ENCODE measurements at regions of chr6 and their contacts with region 1.

Region 1: DNA sequence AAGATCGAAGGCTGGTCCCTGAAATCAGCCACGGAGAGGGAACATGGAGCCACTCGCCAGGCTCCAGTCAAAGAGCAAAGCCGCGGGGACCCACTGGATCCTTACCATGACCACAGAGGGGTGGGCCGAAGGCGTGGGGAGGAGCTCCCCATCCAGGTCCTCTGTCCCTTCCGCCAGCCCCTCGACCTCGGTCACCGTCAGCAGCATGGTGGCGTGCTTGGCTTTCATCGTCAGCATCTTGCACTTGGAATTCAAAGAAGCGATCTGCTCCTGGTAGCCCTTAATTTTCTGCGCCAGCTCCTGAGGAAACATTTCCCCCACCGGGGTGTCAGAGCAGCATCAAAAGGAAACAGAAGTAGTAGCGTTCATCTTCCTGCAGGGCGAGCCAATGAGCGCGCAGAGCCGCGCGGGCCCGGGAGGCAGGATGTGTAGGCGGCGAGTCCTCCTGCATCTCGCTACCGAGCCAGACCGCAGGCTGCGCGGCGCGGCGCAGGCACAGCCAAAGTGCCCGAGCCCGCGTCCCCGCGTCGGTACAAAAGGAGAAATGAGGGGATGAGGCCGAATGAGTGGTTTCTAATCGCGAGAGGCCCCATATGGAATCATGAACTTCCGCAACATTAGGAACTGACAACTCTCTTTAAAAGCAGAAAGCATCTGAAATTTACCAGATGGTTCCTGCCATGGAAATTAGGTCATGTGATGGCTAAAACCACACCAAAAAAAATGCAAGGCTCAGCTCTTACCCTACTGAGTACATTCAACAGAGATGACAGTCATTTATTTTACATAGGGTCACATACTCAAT is 335.2 kb downstream of the SYNE1 start:
- DNase-seq: peak; percentile 85
- ATAC-seq: peak; percentile 98
- H3K4me3 ChIP-seq: peak overlapping the region; percentile 60 to 78 (median 74)
- H3K27ac ChIP-seq: peak overlapping the region; percentile 87
- H3K4me1 ChIP-seq: peaks cover 41% of the 10 kb centered on the region
- H3K27me3 ChIP-seq: no peaks in the 10 kb centered on the region; a peak in 1 of 5 replicates
- CTCF ChIP-seq: peak; percentile 84
- EP300 ChIP-seq: 0 out of 4 replicates have a peak, but pooled peaks of 1 of the 2 experiments have one; percentile 2
- POLR2A ChIP-seq: peak; percentile 41 to 71
- RAD21 ChIP-seq: peak; percentile 83

Region 2: GRCh38 chr6:151647976-151648639 is 653.9 kb before region 1 on chr6:
- CTCF ChIA-PET with region 1: no interaction called
- POLR2A ChIA-PET with region 1: no interaction called
- in situ Hi-C with region 1: no loop called
- intact Hi-C with region 1: no loop called
- DNase-seq: peak; percentile 56
- ATAC-seq: peak; percentile 88
- H3K4me3 ChIP-seq: no peak overlapping the region
- H3K27ac ChIP-seq: no peak overlapping the region
- H3K4me1 ChIP-seq: peaks cover 39% of the 10 kb centered on the region
- H3K27me3 ChIP-seq: no peaks in the 10 kb centered on the region
- CTCF ChIP-seq: peak; percentile 83
- EP300 ChIP-seq: no peak
- POLR2A ChIP-seq: no peak
- RAD21 ChIP-seq: peak; percentile 66; the same call in 1 of the 2 replicates

Region 3: GRCh38 chr6:152195896-152196295 is 106.1 kb before region 1 on chr6:
- CTCF ChIA-PET with region 1: no interaction called
- POLR2A ChIA-PET with region 1: no interaction called
- in situ Hi-C with region 1: no loop called
- intact Hi-C with region 1: no loop called
- DNase-seq: no peak
- ATAC-seq: no peak
- H3K4me3 ChIP-seq: no peak overlapping the region
- H3K27ac ChIP-seq: no peak overlapping the region
- H3K4me1 ChIP-seq: no peaks in the 10 kb centered on the region
- H3K27me3 ChIP-seq: no peaks in the 10 kb centered on the region
- CTCF ChIP-seq: no peak
- EP300 ChIP-seq: no peak
- POLR2A ChIP-seq: no peak
- RAD21 ChIP-seq: no peak

Region 4: DNA sequence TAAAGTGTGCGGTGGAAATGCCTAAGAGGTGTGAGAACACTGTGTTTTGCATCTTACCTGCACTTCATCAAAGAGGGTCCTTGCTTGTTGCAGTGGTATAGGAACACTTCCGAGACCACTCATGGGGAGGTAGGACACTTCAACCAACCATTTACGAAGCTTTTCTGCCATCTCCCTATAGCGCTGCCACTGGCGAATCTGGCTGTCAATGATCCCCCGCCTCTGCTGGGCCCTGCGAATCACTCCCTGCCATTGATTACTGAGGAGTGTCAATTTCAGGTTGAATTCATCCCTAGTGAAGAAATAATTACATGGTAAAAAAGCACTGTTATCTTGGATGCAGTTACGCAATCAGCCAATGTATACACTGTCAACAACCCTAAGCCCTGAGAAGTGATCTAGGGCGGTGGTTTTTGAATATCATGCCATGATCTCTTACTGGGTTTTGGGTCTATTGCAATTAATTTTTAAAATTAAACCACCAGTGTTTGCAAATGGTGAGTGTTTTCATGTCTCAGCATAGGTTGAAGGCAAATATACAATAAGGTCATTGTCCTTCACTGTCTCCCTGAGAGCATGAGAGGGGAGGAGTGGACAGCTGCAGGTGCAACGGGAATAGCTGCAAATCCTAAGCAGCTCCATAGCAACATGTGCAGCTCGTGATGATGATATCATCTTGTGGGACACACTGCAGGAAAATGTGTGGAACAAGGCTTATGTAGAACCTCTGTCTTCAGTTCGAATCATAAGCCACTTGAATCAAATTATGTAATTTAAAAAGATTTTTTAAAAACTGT is 93.9 kb before region 1 on chr6:
- CTCF ChIA-PET with region 1: no interaction called
- POLR2A ChIA-PET with region 1: no interaction called
- in situ Hi-C with region 1: no loop called
- intact Hi-C with region 1: no loop called
- DNase-seq: peak; percentile 50
- ATAC-seq: peak; percentile 90
- H3K4me3 ChIP-seq: no peak overlapping the region
- H3K27ac ChIP-seq: no peak overlapping the region
- H3K4me1 ChIP-seq: peaks cover 9% of the 10 kb centered on the region; the same call in 1 of the 2 replicates
- H3K27me3 ChIP-seq: no peaks in the 10 kb centered on the region
- CTCF ChIP-seq: no peak
- EP300 ChIP-seq: peak; percentile 26 to 27; a peak in 2 of 4 replicates
- POLR2A ChIP-seq: no peak
- RAD21 ChIP-seq: no peak

Region 5: GRCh38 chr6:152277826-152278329 is 24.1 kb before region 1 on chr6:
- CTCF ChIA-PET with region 1: no interaction called
- POLR2A ChIA-PET with region 1: interaction called, 27 read pairs
- in situ Hi-C with region 1: no loop called
- intact Hi-C with region 1: no loop called
- DNase-seq: peak; percentile 77
- ATAC-seq: peak; percentile 99
- H3K4me3 ChIP-seq: peak overlapping the region; percentile 5 to 54 (median 29); a peak in 4 of 6 replicates
- H3K27ac ChIP-seq: peak overlapping the region; percentile 71
- H3K4me1 ChIP-seq: peaks cover 25% of the 10 kb centered on the region
- H3K27me3 ChIP-seq: no peaks in the 10 kb centered on the region
- CTCF ChIP-seq: no peak; the same call in 1 of the 2 replicates
- EP300 ChIP-seq: 0 out of 4 replicates have a peak, but pooled peaks of 1 of the 2 experiments have one; percentile 11
- POLR2A ChIP-seq: 0 out of 4 replicates have a peak, but pooled peaks of 1 of the 2 experiments have one; percentile 24
- RAD21 ChIP-seq: peak; percentile 48; the same call in 1 of the 2 replicates

Region 6: DNA sequence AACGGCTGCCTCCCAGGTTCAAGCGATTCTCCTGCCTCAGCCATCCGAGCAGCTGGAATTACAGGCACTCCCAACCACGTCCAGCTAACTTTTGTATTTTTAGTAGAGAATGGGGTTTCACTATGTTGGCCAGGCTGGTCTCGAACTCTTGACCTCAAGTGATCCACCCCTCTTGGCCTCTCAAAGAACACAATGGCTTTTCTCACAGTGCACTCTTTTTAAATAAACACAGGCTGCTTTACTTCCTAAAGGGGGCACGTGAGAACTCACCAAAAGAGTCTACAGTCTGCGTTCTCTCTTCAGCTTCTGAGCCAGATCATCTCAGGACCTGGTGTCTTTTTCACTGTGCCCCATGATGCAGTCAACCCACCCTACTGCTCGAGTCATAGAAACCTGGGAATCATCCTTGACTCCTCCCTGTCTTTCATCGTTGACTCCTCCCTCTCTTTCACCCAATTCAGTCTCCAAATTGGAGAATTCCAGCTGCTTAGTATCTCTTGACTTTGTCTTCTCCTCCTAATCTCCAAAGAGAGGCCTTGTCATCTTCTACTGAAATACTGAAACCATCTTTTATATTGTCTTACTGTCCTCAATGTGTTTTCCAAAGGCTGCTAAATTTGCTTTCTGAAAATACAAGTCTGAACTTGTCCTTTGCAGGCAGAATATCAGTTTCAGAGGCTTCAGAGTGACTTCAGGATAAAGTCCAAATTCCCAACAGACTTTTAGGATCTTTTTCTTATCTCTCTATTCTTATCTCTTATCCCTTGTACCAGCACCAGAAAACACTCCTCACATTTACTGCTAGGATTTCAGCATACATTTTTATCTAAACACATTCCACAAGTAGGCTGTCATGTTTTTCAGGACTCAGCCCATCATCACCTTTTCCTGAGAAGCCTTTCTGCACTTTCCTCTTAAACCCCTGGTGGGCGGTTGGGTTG is 11.8 kb after region 1 on chr6:
- CTCF ChIA-PET with region 1: no interaction called
- POLR2A ChIA-PET with region 1: interaction called, 17 read pairs
- in situ Hi-C with region 1: no loop called
- intact Hi-C with region 1: loop called (anchors 1 kb)
- DNase-seq: peak; percentile 89
- ATAC-seq: peak; percentile 97
- H3K4me3 ChIP-seq: peak overlapping the region; percentile 5 to 45 (median 9); a peak in 2 of 6 replicates
- H3K27ac ChIP-seq: peak overlapping the region; percentile 62
- H3K4me1 ChIP-seq: peaks cover 22% of the 10 kb centered on the region
- H3K27me3 ChIP-seq: no peaks in the 10 kb centered on the region
- CTCF ChIP-seq: no peak
- EP300 ChIP-seq: no peak; a peak in 1 of 4 replicates
- POLR2A ChIP-seq: no peak
- RAD21 ChIP-seq: no peak

Region 7: DNA sequence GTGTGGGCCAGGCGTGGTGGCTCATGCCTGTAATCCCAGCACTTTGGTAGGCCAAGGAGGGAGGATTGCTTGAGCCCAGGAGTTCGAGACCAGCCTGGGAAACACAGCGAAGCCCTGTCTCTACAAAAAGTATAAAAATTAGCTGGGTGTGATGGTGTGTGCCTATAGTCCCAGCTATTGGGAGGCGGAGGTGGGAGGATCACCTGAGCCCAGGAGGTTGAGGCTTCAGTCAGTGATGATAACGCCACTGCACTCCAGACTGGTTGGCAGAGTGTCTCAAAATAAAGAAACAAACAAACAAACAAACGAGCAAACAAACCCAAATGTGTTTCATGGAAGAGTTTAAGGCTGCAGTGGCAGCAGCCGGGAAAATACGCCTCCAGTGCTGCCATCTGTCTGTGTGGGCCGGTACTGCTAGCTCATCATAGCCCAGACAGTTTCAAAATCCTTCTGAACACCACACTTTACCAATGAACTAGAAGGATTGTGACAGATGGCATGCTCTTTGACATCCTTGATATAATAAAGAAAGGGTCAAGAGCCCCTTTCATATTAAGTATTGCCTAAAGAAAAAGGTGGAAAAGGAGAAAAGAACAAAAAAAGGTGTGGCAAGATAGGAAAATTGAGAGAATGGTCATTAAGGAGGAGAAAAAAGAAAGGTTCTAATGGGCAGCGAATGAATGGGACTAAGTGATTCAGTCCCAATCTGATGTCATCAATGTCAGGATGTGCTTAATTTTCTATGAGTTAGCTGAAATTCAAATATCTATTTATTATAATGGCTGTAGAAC is 36.6 kb after region 1 on chr6:
- CTCF ChIA-PET with region 1: interaction called, 8 read pairs
- POLR2A ChIA-PET with region 1: interaction called, 13 read pairs
- in situ Hi-C with region 1: no loop called
- intact Hi-C with region 1: loop called (anchors 1 kb)
- DNase-seq: peak; percentile 23
- ATAC-seq: peak; percentile 93
- H3K4me3 ChIP-seq: no peak overlapping the region
- H3K27ac ChIP-seq: no peak overlapping the region
- H3K4me1 ChIP-seq: no peaks in the 10 kb centered on the region
- H3K27me3 ChIP-seq: no peaks in the 10 kb centered on the region
- CTCF ChIP-seq: peak; percentile 87
- EP300 ChIP-seq: no peak
- POLR2A ChIP-seq: no peak
- RAD21 ChIP-seq: peak; percentile 72

Region 8: DNA sequence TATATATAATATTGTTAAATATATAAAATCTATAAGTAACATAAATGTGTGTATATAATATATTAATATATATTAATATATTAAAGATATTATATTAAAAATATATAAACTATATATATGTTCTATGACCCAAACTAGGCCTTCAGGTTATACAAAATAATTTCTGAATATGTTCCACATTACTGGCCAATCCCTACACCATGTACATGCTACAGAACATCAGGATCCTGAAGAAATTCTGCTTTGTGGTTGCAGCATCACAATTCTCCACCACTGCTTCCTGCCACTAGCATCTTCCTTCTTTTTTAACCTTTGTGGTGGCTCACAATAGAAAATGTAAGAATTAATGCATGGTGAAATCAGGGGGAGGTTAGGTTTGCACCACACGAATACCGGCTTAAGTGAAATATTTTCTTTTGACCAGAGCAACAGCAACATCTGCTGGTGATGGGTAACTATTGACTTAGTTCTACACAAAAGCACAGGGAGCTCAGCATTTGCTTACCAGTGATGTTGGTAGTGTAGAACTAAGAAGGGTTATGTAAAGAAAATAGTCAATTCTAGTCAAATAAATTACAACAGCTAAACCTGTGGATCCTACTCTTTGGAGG is 54.6 kb after region 1 on chr6:
- CTCF ChIA-PET with region 1: no interaction called
- POLR2A ChIA-PET with region 1: no interaction called
- in situ Hi-C with region 1: no loop called
- intact Hi-C with region 1: loop called (anchors 1 kb)
- DNase-seq: peak; percentile 63
- ATAC-seq: peak; percentile 96
- H3K4me3 ChIP-seq: no peak overlapping the region
- H3K27ac ChIP-seq: no peak overlapping the region
- H3K4me1 ChIP-seq: no peaks in the 10 kb centered on the region
- H3K27me3 ChIP-seq: no peaks in the 10 kb centered on the region
- CTCF ChIP-seq: peak; percentile 82
- EP300 ChIP-seq: no peak
- POLR2A ChIP-seq: no peak
- RAD21 ChIP-seq: peak; percentile 76; the same call in 1 of the 2 replicates

Region 9: DNA sequence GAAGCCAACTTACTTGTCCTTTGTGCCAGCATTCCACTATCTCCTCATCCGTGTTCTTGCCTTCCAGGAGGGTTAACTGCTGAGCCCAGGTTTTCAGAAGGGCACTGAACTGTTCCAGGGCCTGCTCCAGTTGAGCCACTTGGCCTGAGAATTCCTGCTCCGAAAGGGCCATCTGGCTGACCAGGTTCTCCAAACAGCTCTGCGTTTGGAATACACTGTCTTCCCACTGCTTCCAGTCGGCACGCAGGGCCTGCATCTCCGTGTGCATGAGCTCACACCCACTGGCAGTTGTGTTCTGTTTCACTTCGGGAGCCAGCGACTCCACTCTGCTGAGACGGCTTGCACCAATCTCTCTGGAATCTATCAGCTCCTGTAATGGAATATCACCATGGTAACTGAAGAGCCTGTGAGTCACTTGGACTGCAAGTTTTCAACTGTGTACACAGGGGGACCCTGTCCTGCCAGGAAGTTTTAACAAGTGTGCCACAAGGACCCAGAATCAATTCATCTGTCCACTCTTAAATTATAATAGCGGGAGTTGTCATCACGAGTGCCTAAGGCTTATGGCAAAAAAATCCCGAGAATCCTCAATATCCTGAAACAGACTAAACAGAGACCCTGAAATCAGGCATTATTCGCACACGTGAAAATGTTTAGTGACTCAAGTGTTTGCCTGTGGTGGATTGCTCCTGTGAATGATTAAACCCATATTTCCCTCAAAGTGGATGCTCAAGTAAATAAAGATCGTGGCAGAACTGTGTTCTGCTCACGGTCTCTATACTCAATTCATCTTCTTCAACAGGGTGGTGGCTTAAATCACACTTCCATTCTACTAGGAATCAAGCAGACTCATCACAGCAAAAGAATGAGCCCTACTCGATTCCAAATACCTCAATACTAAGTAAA is 79.3 kb after region 1 on chr6:
- CTCF ChIA-PET with region 1: no interaction called
- POLR2A ChIA-PET with region 1: no interaction called
- in situ Hi-C with region 1: no loop called
- intact Hi-C with region 1: loop called (anchors 2 kb)
- DNase-seq: peak; percentile 91
- ATAC-seq: peak; percentile 94
- H3K4me3 ChIP-seq: peak overlapping the region; percentile 66 to 76 (median 68)
- H3K27ac ChIP-seq: peak overlapping the region; percentile 55
- H3K4me1 ChIP-seq: peaks cover 26% of the 10 kb centered on the region
- H3K27me3 ChIP-seq: no peaks in the 10 kb centered on the region; a peak in 1 of 5 replicates
- CTCF ChIP-seq: no peak
- EP300 ChIP-seq: peak; percentile 52 to 78; a peak in 3 of 4 replicates
- POLR2A ChIP-seq: peak in 1 of 2 experiments; percentile 94; a peak in 2 of 4 replicates
- RAD21 ChIP-seq: no peak

Region 10: DNA sequence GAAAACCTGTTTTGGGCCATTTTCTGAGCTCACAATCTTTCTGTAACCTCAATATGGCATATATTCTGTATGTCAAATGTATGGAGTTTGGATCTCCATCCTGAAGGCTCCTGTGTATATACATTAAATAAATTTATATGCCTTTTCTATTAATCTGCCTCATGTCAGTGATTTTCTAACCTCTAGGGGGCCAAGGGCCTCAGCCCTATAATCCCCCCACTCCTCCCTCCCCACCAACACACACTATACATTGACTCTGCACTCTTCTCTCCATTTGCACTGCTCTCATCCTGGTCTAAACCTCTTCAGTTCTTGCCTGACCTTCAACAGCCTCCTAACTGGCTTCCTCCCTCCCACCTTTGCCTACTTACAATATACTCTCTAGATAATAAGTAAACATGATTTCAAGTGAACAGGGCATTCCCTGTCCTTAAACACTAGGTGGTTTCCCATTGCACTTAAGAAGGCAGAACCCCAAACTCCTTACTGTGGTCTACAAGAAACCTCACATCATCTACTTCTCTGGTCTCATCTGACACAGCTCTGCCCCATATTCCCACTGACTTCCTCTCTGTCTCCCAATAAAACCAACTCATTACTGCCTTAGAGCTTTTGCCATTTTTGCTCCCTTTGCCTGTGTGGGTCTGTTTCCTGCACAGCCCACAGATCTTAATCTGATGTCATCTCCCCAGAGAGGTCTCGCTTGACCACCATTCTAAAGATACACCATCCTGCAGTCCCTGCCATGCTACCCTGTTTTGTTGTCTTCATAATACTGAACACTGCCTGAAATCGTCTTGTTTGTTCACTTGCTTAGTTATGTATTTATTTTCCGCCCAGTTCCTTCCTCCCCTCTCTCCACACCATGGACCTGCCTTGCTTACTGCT is 121.5 kb after region 1 on chr6:
- CTCF ChIA-PET with region 1: no interaction called
- POLR2A ChIA-PET with region 1: no interaction called
- in situ Hi-C with region 1: no loop called
- intact Hi-C with region 1: no loop called
- DNase-seq: no peak
- ATAC-seq: no peak
- H3K4me3 ChIP-seq: no peak overlapping the region
- H3K27ac ChIP-seq: no peak overlapping the region
- H3K4me1 ChIP-seq: no peaks in the 10 kb centered on the region
- H3K27me3 ChIP-seq: peaks cover 0 to 7% of the 10 kb centered on the region in 2 experiments; a peak in 1 of 5 replicates
- CTCF ChIP-seq: no peak
- EP300 ChIP-seq: no peak
- POLR2A ChIP-seq: no peak
- RAD21 ChIP-seq: no peak